Activated CD4-positive, alpha-beta T cell treated with anti-CD3 and anti-CD28 coated beads, Interleukin-2, amount 10 ng/mL, durations not matched to agents 7 days and 5 days (primary cell): ENCODE measurements at regions of chr2 and their contacts with region 1.

Region 1: GRCh38 chr2:28423856-28424605 is 31.4 kb downstream of the FOSL2 start:
- DNase-seq: peak; percentile 57
- H3K4me3 Mint-ChIP-seq: peak overlapping the region; percentile 59
- H3K27ac Mint-ChIP-seq: peak overlapping the region; percentile 94
- H3K4me1 Mint-ChIP-seq: peaks cover 45% of the 10 kb centered on the region
- H3K27me3 Mint-ChIP-seq: no peaks in the 10 kb centered on the region

Region 2: DNA sequence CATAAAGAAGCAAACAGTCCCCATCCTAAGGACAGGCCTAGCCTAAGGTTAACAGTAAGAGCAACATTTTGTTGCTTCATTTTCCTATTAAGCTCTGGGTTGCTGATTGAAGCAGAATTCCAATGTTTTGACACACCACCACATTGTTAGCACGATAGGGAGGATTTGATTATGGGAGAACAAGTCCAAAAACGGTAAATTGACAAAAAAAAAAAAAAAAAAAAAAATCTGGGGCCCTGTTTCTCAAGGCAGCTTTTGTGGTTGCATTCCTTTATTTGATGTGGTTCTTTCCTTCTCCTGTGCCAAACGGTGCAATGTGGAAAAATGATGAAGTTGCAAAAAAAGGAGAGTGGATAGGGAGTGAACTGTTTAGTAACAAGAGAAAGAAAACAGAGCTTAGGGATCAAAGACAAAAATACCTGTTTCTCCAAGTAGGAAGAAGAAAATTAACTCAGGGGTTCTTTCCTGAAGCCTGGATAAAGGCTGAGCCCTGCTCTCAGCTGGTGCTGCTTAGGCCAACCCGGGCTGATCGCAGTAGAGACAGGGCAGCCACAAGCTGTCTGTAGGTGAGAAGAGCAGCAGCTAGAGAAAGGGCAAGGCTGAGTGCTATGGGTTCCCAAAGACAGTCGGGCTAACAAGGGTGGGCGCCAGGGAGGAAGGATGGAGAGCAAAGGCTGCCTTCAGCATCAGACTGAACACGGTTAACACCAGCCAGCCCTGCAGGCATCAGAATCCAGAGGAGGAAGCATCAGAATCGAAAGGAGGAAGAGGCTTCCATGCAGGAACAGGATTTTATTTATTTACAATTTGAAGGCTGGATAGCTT is 199.2 kb before region 1 on chr2:
- CTCF ChIA-PET with region 1: no interaction called
- POLR2A ChIA-PET with region 1: no interaction called
- DNase-seq: no peak
- H3K4me3 Mint-ChIP-seq: no peak overlapping the region
- H3K27ac Mint-ChIP-seq: no peak overlapping the region
- H3K4me1 Mint-ChIP-seq: peaks cover 6% of the 10 kb centered on the region
- H3K27me3 Mint-ChIP-seq: no peaks in the 10 kb centered on the region

Region 3: GRCh38 chr2:28408764-28409599 is 15.0 kb before region 1 on chr2:
- CTCF ChIA-PET with region 1: interaction called, 10 read pairs
- POLR2A ChIA-PET with region 1: interaction called, 3 read pairs
- DNase-seq: peak; percentile 81
- H3K4me3 Mint-ChIP-seq: peak overlapping the region; percentile 46
- H3K27ac Mint-ChIP-seq: peak overlapping the region; percentile 95
- H3K4me1 Mint-ChIP-seq: peaks cover 76% of the 10 kb centered on the region
- H3K27me3 Mint-ChIP-seq: no peaks in the 10 kb centered on the region